ENCODE measurements at regions of chr14 and their contacts with region 1.

Region 1: GRCh38 chr14:38867561-38868150 is 235.4 kb downstream of the SEC23A start:
- DNase-seq: peak; percentile 18 to 81
- ATAC-seq: peak; percentile 96 to 99
- H3K4me3 ChIP-seq: no peak overlapping the region
- H3K27ac ChIP-seq: no peak overlapping the region
- H3K4me1 ChIP-seq: no peaks in the 10 kb centered on the region
- CTCF ChIP-seq: peak; percentile 81
- EP300 ChIP-seq: no peak
- POLR2A ChIP-seq: no peak
- RAD21 ChIP-seq: peak; percentile 76 to 83

Region 2: GRCh38 chr14:38721822-38722431 is 145.7 kb before region 1 on chr14:
- CTCF ChIA-PET with region 1: interaction called, 16 read pairs
- POLR2A ChIA-PET with region 1: no interaction called
- DNase-seq: peak; percentile 18 to 46
- ATAC-seq: peak; percentile 85 to 93
- H3K4me3 ChIP-seq: no peak overlapping the region
- H3K27ac ChIP-seq: no peak overlapping the region
- H3K4me1 ChIP-seq: no peaks in the 10 kb centered on the region
- CTCF ChIP-seq: peak; percentile 56
- EP300 ChIP-seq: no peak
- POLR2A ChIP-seq: no peak
- RAD21 ChIP-seq: peak; percentile 62 to 78

Region 3: GRCh38 chr14:38880643-38881524 is 13.2 kb after region 1 on chr14:
- CTCF ChIA-PET with region 1: interaction called, 15 read pairs
- POLR2A ChIA-PET with region 1: no interaction called
- DNase-seq: no peak
- ATAC-seq: no peak
- H3K4me3 ChIP-seq: no peak overlapping the region
- H3K27ac ChIP-seq: no peak overlapping the region
- H3K4me1 ChIP-seq: no peaks in the 10 kb centered on the region
- CTCF ChIP-seq: no peak
- EP300 ChIP-seq: no peak
- POLR2A ChIP-seq: no peak
- RAD21 ChIP-seq: no peak

Region 4: DNA sequence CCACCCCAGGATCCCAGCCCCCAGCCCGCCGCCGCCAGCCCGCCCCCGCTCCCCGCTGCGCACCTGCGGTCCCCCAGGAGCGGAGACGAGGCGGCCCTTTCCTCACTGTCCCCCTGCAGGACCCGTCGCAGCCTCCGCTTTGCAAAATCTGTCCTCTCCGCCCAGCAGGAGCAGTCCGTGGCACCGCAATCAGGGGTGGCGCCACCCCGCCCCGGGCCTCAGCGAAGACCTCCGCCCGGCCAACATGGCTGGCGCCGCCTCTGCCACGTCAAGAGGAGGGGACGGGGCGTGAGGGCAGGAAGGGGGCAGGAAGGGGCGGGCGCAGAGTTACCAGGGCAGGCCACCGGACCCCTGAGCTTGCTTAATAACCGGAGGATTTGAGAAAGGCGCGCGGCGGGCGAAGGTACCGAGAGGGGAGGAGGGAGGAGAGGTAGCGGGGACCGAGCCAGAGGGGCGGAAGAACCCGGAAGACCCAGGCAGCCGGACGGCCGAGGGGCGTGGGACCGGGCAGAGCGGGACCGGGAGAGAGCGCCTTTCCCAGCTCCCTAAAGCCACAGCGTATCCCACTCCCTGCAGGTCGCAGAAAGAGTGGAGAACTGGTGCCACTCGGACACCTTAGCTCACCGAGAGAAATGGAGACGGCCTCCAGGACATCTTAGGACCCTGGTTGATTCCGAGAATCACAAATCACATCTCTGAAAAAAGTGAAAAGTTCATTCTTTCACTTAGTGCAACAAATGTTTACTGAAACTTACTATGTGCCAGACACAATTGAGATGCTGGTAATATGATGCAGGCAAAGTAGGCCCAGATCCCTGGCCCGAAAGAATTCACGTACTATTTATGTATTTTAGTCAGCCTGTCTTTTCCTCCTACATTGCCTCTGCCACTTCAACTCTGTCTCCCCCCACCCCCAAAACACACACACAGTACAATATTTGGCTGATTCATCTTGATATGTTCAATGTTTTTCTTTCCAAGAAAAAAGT is 235.6 kb after region 1 on chr14 and contains the start of gene SEC23A:
- CTCF ChIA-PET with region 1: no interaction called
- POLR2A ChIA-PET with region 1: no interaction called
- DNase-seq: peak; percentile 75 to 92
- ATAC-seq: peak; percentile 97 to 98
- H3K4me3 ChIP-seq: peak within 1 kb of the TSS; percentile 90
- H3K27ac ChIP-seq: peak within 1 kb of the TSS; percentile 97
- H3K4me1 ChIP-seq: peaks cover 18% of the 10 kb centered on the region
- CTCF ChIP-seq: no peak
- EP300 ChIP-seq: no peak
- POLR2A ChIP-seq: peak; percentile 83
- RAD21 ChIP-seq: no peak
- polyA plus RNA-seq, gene SEC23A: 176 and 238 TPM in 2 replicates

Region 5: DNA sequence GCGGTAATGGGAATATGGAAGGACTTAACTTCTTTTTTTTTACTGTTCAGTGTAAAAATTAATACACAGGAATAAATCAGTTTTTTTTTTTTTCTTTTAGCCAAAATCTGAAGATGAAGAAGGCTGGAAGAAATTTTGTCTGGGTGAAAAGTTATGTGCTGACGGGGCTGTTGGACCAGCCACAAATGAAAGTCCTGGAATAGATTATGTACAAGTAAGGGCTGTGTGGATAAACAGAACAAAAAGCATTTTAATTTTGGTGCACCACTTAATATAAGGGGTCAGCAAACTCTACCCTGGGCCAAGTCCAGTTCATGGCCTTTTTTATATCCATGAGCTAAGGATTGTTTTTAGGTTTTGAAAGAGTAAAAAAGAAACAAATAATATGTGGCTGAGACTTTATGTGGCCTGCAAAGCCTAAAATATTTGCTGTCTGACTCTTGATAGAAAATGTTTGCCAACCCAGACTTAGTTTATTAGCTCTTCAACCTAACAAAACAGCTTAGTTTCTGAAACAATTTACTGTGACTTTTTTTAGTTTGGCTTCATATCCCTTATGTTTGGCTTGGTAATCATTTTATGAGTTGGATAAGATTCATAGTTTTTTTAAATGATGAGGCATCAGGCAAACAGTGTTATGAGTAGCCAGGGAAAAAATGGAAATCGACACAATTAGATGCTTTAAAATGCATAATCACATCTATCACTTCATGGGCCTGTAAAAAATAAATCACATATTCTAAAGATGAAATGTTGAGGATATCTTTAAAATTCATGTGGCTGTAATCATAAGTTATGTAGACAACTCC is 254.9 kb after region 1 on chr14:
- CTCF ChIA-PET with region 1: no interaction called
- POLR2A ChIA-PET with region 1: no interaction called
- DNase-seq: no peak
- ATAC-seq: no peak
- H3K4me3 ChIP-seq: no peak overlapping the region
- H3K27ac ChIP-seq: no peak overlapping the region
- H3K4me1 ChIP-seq: no peaks in the 10 kb centered on the region
- CTCF ChIP-seq: no peak
- EP300 ChIP-seq: no peak
- POLR2A ChIP-seq: no peak
- RAD21 ChIP-seq: no peak